PC-3 (cell line): ENCODE measurements at regions of chr19 and their contacts with region 1.

Region 1: GRCh38 chr19:7562646-7563393 is 27.3 kb downstream of the PNPLA6 start:
- DNase-seq: peak; percentile 58
- ATAC-seq: no peak
- H3K4me3 ChIP-seq: no peak overlapping the region
- H3K27ac ChIP-seq: no peak overlapping the region
- H3K4me1 ChIP-seq: no peaks in the 10 kb centered on the region
- H3K27me3 ChIP-seq: no peaks in the 10 kb centered on the region
- CTCF ChIP-seq: no peak

Region 2: DNA sequence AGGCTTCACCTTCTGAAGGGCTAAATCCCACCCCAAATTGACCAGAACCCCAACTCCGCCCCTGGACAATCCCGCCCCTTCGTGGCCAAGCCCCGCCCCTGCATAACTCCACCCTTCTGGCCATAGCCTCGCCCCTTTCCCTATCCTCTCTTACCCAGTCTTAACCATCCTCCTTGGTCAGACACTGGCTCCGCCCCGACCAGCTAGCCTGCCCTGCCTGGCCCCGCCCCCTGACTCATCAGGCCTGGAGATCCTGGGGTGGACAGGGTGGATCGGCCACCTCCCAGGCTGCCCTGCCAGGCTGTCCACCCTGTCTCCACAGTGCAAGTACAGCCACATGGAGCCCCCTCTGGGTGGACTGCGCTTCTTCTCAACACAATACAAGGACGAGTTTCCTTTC is 54.9 kb before region 1 on chr19:
- CTCF ChIA-PET with region 1: no interaction called
- POLR2A ChIA-PET with region 1: no interaction called
- intact Hi-C with region 1: no loop called
- DNase-seq: peak; percentile 97
- ATAC-seq: peak; percentile 68
- H3K4me3 ChIP-seq: no peak overlapping the region
- H3K27ac ChIP-seq: no peak overlapping the region
- H3K4me1 ChIP-seq: peaks cover 16% of the 10 kb centered on the region
- H3K27me3 ChIP-seq: no peaks in the 10 kb centered on the region
- CTCF ChIP-seq: no peak

Region 3: GRCh38 chr19:7552781-7553180 is 10.0 kb before region 1 on chr19:
- CTCF ChIA-PET with region 1: no interaction called
- POLR2A ChIA-PET with region 1: interaction called, 13 read pairs
- intact Hi-C with region 1: no loop called
- DNase-seq: no peak
- ATAC-seq: no peak
- H3K4me3 ChIP-seq: no peak overlapping the region
- H3K27ac ChIP-seq: no peak overlapping the region
- H3K4me1 ChIP-seq: no peaks in the 10 kb centered on the region
- H3K27me3 ChIP-seq: no peaks in the 10 kb centered on the region
- CTCF ChIP-seq: no peak

Region 4: DNA sequence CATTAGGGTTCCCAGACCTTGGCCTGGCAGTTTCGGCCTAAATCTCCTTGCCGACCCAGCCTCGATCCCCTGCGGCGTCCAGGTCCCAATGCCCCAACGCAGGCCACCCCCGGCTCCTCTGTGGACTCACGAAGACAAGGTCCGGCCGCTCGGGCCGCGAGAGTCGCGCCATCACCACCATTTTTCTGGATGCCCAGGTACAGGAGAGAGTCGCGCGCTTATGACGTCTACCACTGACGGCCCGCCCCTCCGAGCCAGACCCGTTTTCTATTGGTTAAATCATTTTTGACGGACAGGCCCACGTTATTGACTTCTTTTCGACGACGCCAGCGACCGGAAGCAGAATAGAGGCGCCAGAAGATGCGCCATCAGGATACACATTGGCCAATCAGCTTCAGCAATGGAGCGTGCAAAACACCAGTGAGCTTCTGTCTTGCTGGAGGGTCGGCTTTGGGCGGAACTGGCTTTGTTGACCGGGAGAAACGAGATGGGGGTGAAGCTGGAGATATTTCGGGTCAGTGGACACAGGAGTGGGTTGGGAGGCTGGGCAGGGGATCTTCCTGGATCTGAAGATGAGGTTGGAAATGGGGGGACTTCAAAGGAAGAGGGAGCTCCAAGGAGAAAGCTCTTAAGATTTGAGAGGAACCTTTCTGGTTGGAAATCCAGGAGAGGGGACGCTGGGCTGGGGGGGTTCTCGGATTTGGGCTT is 66.7 kb after region 1 on chr19 and contains the starts of genes PET100 and XAB2:
- CTCF ChIA-PET with region 1: interaction called, 14 read pairs
- POLR2A ChIA-PET with region 1: no interaction called
- intact Hi-C with region 1: no loop called
- DNase-seq: peak; percentile 100
- ATAC-seq: peak; percentile 99
- H3K4me3 ChIP-seq: peak within 1 kb of the TSS; percentile 87
- H3K27ac ChIP-seq: no peak within 1 kb of the TSS
- H3K4me1 ChIP-seq: peaks cover 15% of the 10 kb centered on the region
- H3K27me3 ChIP-seq: no peaks in the 10 kb centered on the region
- CTCF ChIP-seq: no peak
- total RNA-seq, gene PET100: 101 and 141 TPM in 2 replicates
- total RNA-seq, gene XAB2: 81.1 and 84.4 TPM in 2 replicates

Region 5: GRCh38 chr19:7658219-7658686 is 95.4 kb after region 1 on chr19:
- CTCF ChIA-PET with region 1: interaction called, 15 read pairs
- POLR2A ChIA-PET with region 1: no interaction called
- intact Hi-C with region 1: no loop called
- DNase-seq: no peak
- ATAC-seq: no peak
- H3K4me3 ChIP-seq: no peak overlapping the region
- H3K27ac ChIP-seq: no peak overlapping the region
- H3K4me1 ChIP-seq: no peaks in the 10 kb centered on the region
- H3K27me3 ChIP-seq: peaks cover 17% of the 10 kb centered on the region; the same call in 1 of the 2 replicates
- CTCF ChIP-seq: no peak

Region 6: DNA sequence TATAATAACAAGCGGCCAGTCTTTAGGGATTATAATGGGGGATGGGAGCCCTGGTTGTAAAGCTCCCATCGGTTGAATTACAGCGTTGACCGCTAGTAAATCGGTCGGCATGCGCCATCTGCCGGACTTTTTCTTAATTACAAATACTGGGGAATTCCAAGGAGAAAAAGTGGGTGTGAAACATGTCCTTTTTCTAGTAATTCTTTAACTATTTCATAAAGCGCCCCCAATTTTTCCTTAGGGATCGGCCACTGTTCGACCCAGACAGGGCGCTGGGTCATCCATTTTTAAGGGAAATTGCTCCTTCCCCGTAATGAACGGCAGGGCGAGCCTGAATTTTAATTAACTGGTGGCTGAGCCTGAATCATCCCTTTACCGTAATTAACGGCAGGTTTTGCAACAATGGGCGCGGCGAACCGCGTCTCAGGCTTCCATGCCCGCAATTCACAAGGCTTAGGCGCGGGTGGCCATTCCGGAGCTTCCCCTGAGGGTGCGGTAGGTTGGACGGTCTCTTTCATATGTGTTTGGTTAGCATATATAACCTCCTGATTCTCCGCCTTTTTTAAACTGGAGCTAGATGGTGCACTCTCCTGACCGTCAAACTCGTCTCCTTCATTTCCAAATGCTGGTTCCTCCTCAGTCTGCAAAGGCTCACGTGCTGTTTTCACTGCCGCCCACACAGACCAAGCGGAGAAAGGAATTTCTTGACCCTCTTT is 237.0 kb after region 1 on chr19:
- CTCF ChIA-PET with region 1: interaction called, 50 read pairs
- POLR2A ChIA-PET with region 1: no interaction called
- intact Hi-C with region 1: loop called (anchors 1 kb)
- DNase-seq: peak; percentile 94
- ATAC-seq: peak; percentile 68
- H3K4me3 ChIP-seq: peak overlapping the region; percentile 68
- H3K27ac ChIP-seq: no peak overlapping the region
- H3K4me1 ChIP-seq: peaks cover 34% of the 10 kb centered on the region
- H3K27me3 ChIP-seq: no peaks in the 10 kb centered on the region
- CTCF ChIP-seq: peak; percentile 83